Adrenal gland (tissue), 19 donors: ENCODE measurements at regions of chr4 and their contacts with region 1.

Region 1: GRCh38 chr4:114077610-114078009 is 98.2 kb upstream of the ARSJ start:
- DNase-seq: peak in 4 of 7 donors; percentile 24 to 50 (median 30)
- H3K4me3 ChIP-seq: no peak overlapping the region
- H3K27ac ChIP-seq: no peak overlapping the region
- H3K4me1 ChIP-seq: no peaks in the 10 kb centered on the region
- H3K27me3 ChIP-seq: no peaks in the 10 kb centered on the region
- CTCF ChIP-seq: no peak
- POLR2A ChIP-seq: no peak

Region 2: GRCh38 chr4:113394730-113395530 is 682.7 kb before region 1 on chr4:
- intact Hi-C with region 1: loop called in 1 of 2 experiments (anchors 10 kb)
- DNase-seq: peak; percentile 28 to 75 (median 70)
- H3K4me3 ChIP-seq: no peak overlapping the region
- H3K27ac ChIP-seq: no peak overlapping the region
- H3K4me1 ChIP-seq: no peaks in the 10 kb centered on the region
- H3K27me3 ChIP-seq: no peaks in the 10 kb centered on the region
- CTCF ChIP-seq: peak; percentile 89 to 93 (median 92)
- POLR2A ChIP-seq: no peak

Region 3: GRCh38 chr4:113945906-113946305 is 131.7 kb before region 1 on chr4:
- intact Hi-C with region 1: loop called in 1 of 2 experiments (anchors 10 kb)
- DNase-seq: no peak
- H3K4me3 ChIP-seq: no peak overlapping the region
- H3K27ac ChIP-seq: no peak overlapping the region
- H3K4me1 ChIP-seq: no peaks in the 10 kb centered on the region
- H3K27me3 ChIP-seq: no peaks in the 10 kb centered on the region
- CTCF ChIP-seq: no peak
- POLR2A ChIP-seq: no peak

Region 4: GRCh38 chr4:115292320-115293092 is 1214.9 kb after region 1 on chr4:
- intact Hi-C with region 1: no loop called
- DNase-seq: no peak
- H3K4me3 ChIP-seq: no peak overlapping the region
- H3K27ac ChIP-seq: no peak overlapping the region
- H3K4me1 ChIP-seq: no peaks in the 10 kb centered on the region
- H3K27me3 ChIP-seq: no peaks in the 10 kb centered on the region
- CTCF ChIP-seq: no peak
- POLR2A ChIP-seq: no peak